ENCODE measurements at regions of chr9 and their contacts with region 1.

Region 1: GRCh38 chr9:4984621-4985385 is at the start of gene JAK2:
- DNase-seq: peak; percentile 95
- H3K4me3 Mint-ChIP-seq: peak within 1 kb of the TSS; percentile 90
- H3K27ac Mint-ChIP-seq: peak within 1 kb of the TSS; percentile 76
- H3K4me1 Mint-ChIP-seq: peaks cover 36% of the 10 kb centered on the region
- H3K27me3 Mint-ChIP-seq: no peaks in the 10 kb centered on the region
- CTCF ChIP-seq: peak; percentile 43
- total RNA-seq, gene JAK2: 4.3 and 6.6 TPM in 2 replicates

Region 2: DNA sequence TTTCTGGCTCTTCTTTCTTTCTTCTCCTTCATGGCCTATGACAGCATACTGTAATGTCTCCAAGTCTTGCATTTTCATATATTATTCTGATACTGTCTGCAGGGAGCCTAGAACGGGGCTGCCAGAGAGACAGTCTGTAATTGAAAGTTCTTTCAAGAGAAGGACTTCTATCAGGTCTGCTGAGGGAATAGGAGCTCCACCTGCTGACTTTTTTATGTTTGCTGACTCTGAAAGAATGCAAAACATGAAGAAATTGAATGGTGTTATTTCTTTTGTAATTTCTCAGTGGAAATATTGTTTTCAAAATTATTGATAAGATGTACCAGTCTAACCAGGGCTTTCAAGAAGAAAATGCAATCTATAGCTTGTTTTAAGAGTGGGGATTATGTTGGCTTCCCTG is 1337.2 kb before region 1 on chr9:
- CTCF ChIA-PET with region 1: no interaction called
- POLR2A ChIA-PET with region 1: no interaction called
- intact Hi-C with region 1: no loop called
- DNase-seq: no peak
- H3K4me3 Mint-ChIP-seq: no peak overlapping the region
- H3K27ac Mint-ChIP-seq: no peak overlapping the region
- H3K4me1 Mint-ChIP-seq: no peaks in the 10 kb centered on the region
- H3K27me3 Mint-ChIP-seq: no peaks in the 10 kb centered on the region
- CTCF ChIP-seq: no peak

Region 3: GRCh38 chr9:4382722-4383317 is 602.0 kb before region 1 on chr9:
- CTCF ChIA-PET with region 1: interaction called, 3 read pairs
- POLR2A ChIA-PET with region 1: no interaction called
- intact Hi-C with region 1: loop called (anchors 1 kb)
- DNase-seq: peak; percentile 53
- H3K4me3 Mint-ChIP-seq: no peak overlapping the region
- H3K27ac Mint-ChIP-seq: no peak overlapping the region
- H3K4me1 Mint-ChIP-seq: no peaks in the 10 kb centered on the region
- H3K27me3 Mint-ChIP-seq: no peaks in the 10 kb centered on the region
- CTCF ChIP-seq: peak; percentile 41

Region 4: GRCh38 chr9:4620057-4620760 is 364.6 kb before region 1 on chr9:
- CTCF ChIA-PET with region 1: no interaction called
- POLR2A ChIA-PET with region 1: no interaction called
- intact Hi-C with region 1: no loop called
- DNase-seq: no peak
- H3K4me3 Mint-ChIP-seq: no peak overlapping the region
- H3K27ac Mint-ChIP-seq: no peak overlapping the region
- H3K4me1 Mint-ChIP-seq: peaks cover 3% of the 10 kb centered on the region
- H3K27me3 Mint-ChIP-seq: no peaks in the 10 kb centered on the region
- CTCF ChIP-seq: no peak

Region 5: GRCh38 chr9:4740638-4741364 is 244.0 kb before region 1 on chr9 and contains the start of gene AK3:
- CTCF ChIA-PET with region 1: no interaction called
- POLR2A ChIA-PET with region 1: interaction called, 37 read pairs
- intact Hi-C with region 1: no loop called
- DNase-seq: peak; percentile 85
- H3K4me3 Mint-ChIP-seq: peak within 1 kb of the TSS; percentile 90
- H3K27ac Mint-ChIP-seq: peak within 1 kb of the TSS; percentile 97
- H3K4me1 Mint-ChIP-seq: peaks cover 24% of the 10 kb centered on the region
- H3K27me3 Mint-ChIP-seq: no peaks in the 10 kb centered on the region
- CTCF ChIP-seq: no peak
- total RNA-seq, gene AK3: 61.0 and 64.1 TPM in 2 replicates

Region 6: GRCh38 chr9:4792572-4793458 is 192.0 kb before region 1 on chr9 and contains the start of gene RCL1:
- CTCF ChIA-PET with region 1: interaction called, 14 read pairs
- POLR2A ChIA-PET with region 1: interaction called, 32 read pairs
- intact Hi-C with region 1: loop called (anchors 1 kb)
- DNase-seq: peak; percentile 95
- H3K4me3 Mint-ChIP-seq: peak within 1 kb of the TSS; percentile 100
- H3K27ac Mint-ChIP-seq: peak within 1 kb of the TSS; percentile 85
- H3K4me1 Mint-ChIP-seq: peaks cover 20% of the 10 kb centered on the region
- H3K27me3 Mint-ChIP-seq: no peaks in the 10 kb centered on the region
- CTCF ChIP-seq: no peak
- total RNA-seq, gene RCL1: 20.2 and 27.8 TPM in 2 replicates

Region 7: DNA sequence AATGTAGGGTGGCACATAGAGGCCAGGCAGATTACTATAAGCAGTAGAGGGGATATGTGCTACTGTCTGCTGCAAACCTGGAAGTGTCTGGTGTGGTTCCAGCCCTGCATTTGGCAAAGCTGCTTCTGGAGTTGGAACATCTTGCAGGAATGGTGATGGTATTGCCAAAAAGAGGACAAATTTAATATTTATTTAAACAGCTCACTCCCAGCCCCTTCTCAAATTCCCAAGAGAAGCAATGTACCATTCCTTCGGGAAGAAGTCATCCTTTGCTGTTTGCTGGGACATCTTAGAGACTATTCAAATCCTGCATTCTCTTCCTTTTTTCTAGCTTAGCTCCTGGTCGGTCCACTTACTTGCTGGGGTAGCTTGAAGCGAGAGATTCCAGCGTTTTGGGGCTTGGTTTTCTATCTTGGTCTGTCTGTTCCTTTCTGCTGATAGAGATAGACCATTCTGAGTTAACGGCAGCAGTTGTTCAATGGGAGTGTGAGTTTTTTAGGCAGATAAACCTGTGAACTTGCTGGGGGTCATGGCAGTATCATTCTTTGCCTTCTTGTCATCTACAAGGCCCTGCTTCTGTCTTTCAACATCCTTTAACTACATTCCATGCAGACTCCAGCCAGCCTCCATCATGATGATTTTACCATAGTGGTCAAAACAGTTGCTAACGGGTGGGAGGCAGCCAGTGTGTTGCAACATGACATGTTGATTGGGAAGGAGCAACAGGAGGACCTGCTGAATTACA is 122.1 kb before region 1 on chr9:
- CTCF ChIA-PET with region 1: interaction called, 28 read pairs
- POLR2A ChIA-PET with region 1: interaction called, 10 read pairs
- intact Hi-C with region 1: no loop called
- DNase-seq: no peak
- H3K4me3 Mint-ChIP-seq: no peak overlapping the region
- H3K27ac Mint-ChIP-seq: no peak overlapping the region
- H3K4me1 Mint-ChIP-seq: peaks cover 34% of the 10 kb centered on the region
- H3K27me3 Mint-ChIP-seq: no peaks in the 10 kb centered on the region
- CTCF ChIP-seq: no peak

Region 8: DNA sequence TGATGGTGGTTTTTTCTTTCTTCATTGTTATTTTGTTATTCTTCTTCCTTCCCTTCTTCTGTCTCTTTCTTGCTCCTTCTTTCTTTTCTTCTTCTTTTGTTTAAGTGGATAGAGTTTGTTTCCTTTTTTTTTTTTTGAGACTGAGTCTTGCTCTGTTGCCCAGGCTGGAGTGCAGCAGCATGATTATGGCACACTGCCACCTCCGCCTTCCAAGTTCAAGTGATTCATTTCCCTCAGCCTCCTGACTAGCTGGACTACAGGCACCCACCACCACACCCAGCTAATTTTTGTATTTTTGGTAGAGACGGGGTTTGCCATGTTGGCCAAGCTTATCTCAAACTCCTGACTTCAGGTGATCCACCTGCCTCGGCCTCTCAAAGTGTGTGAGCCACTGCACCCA is 40.6 kb after region 1 on chr9:
- CTCF ChIA-PET with region 1: interaction called, 13 read pairs
- POLR2A ChIA-PET with region 1: no interaction called
- intact Hi-C with region 1: no loop called
- DNase-seq: peak; percentile 12
- H3K4me3 Mint-ChIP-seq: no peak overlapping the region
- H3K27ac Mint-ChIP-seq: no peak overlapping the region
- H3K4me1 Mint-ChIP-seq: peaks cover 6% of the 10 kb centered on the region
- H3K27me3 Mint-ChIP-seq: no peaks in the 10 kb centered on the region
- CTCF ChIP-seq: no peak